ENCODE measurements at regions of chr2 and their contacts with region 1.

Region 1: GRCh38 chr2:129923265-129924091 is 56.0 kb upstream of the RAB6C start:
- DNase-seq: peak; percentile 90
- ATAC-seq: peak; percentile 97
- H3K4me3 Mint-ChIP-seq: peak overlapping the region; percentile 69
- H3K27ac Mint-ChIP-seq: no peak overlapping the region
- H3K4me1 Mint-ChIP-seq: peaks cover 6% of the 10 kb centered on the region
- H3K27me3 Mint-ChIP-seq: peaks cover 19% of the 10 kb centered on the region; the same call in 1 of the 2 replicates
- CTCF ChIP-seq: peak; percentile 52

Region 2: GRCh38 chr2:129587426-129588064 is 335.9 kb before region 1 on chr2:
- CTCF ChIA-PET with region 1: interaction called, 12 read pairs
- POLR2A ChIA-PET with region 1: no interaction called
- DNase-seq: peak; percentile 82
- ATAC-seq: peak; percentile 98
- H3K4me3 Mint-ChIP-seq: no peak overlapping the region; the same call in 1 of the 2 replicates
- H3K27ac Mint-ChIP-seq: no peak overlapping the region
- H3K4me1 Mint-ChIP-seq: peaks cover 2% of the 10 kb centered on the region
- H3K27me3 Mint-ChIP-seq: peaks cover 22% of the 10 kb centered on the region
- CTCF ChIP-seq: peak; percentile 66

Region 3: GRCh38 chr2:129903586-129904425 is 19.7 kb before region 1 on chr2:
- CTCF ChIA-PET with region 1: interaction called, 18 read pairs
- POLR2A ChIA-PET with region 1: no interaction called
- DNase-seq: peak; percentile 63
- ATAC-seq: peak; percentile 86
- H3K4me3 Mint-ChIP-seq: no peak overlapping the region
- H3K27ac Mint-ChIP-seq: no peak overlapping the region
- H3K4me1 Mint-ChIP-seq: peaks cover 9% of the 10 kb centered on the region
- H3K27me3 Mint-ChIP-seq: no peaks in the 10 kb centered on the region; the same call in none of the 2 replicates
- CTCF ChIP-seq: no peak

Region 4: DNA sequence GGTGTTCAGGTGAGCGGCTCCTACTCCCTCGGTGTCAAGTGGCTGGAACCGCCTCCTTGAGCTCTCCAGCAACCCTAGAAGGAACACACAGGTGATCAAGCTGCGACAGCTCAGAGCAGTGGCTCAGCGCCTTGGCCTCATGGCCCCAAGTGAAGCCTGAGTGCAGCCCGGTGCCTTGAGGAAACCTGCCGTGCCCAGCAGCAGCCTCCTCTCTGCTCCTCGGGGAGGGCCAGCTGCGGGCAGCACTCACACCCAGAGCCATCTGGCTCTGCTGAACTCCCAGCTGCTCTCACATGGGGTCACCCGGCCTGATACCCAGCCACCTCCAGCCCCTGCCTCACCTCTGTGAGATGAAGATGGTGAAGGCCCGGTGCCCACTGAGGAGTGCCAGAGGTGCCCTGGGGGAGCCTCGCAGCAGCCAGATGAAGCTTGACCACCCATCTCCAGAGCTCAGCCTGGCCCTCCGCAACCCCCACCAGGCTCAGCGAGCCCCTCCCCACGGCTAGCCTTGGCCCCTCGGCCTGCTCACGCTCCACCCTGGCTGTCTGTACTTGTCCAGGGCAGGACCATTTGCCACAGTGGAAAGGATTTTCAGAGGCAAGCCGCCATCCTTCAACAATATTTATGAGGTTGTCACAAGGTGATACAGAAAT is 14.6 kb before region 1 on chr2:
- CTCF ChIA-PET with region 1: interaction called, 18 read pairs
- POLR2A ChIA-PET with region 1: no interaction called
- DNase-seq: peak; percentile 26
- ATAC-seq: peak; percentile 49
- H3K4me3 Mint-ChIP-seq: no peak overlapping the region
- H3K27ac Mint-ChIP-seq: no peak overlapping the region
- H3K4me1 Mint-ChIP-seq: peaks cover 12% of the 10 kb centered on the region
- H3K27me3 Mint-ChIP-seq: no peaks in the 10 kb centered on the region
- CTCF ChIP-seq: no peak

Region 5: DNA sequence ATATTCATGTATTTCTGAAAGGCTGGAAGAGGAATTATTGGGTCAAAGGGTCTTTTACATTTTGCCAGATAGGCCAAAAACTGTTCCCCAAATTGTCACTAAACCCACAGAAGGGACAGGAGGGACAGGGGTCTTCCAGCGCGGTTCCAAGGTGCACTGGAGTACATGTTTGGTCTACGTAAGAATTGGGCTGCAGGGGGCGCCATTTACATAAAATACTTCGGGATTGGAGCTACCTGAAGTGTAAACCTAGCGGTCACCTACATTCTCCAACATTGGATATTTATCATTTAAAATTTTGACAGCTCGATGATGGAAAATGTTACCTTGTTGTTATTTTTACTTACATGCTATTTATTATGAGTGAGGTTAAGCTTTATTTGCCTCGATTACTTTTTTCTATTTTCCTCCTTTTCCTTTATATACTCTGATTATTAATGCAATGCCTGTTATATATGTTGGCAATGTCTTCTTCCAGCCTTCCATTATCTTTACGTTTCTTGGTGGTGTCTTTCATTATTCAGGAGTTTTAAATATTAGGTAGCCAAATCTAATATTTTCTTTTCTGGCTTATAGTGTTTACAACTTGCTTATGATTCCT is 13.0 kb after region 1 on chr2:
- CTCF ChIA-PET with region 1: interaction called, 12 read pairs
- POLR2A ChIA-PET with region 1: no interaction called
- DNase-seq: peak; percentile 77
- ATAC-seq: no peak
- H3K4me3 Mint-ChIP-seq: no peak overlapping the region
- H3K27ac Mint-ChIP-seq: no peak overlapping the region
- H3K4me1 Mint-ChIP-seq: peaks cover 22% of the 10 kb centered on the region
- H3K27me3 Mint-ChIP-seq: peaks cover 20% of the 10 kb centered on the region
- CTCF ChIP-seq: 0 out of 2 replicates have a peak, but pooled peaks have one; percentile 37